Activated CD4-positive, alpha-beta T cell treated with anti-CD3 and anti-CD28 coated beads, Interleukin-2, amount 10 ng/mL, durations not matched to agents 7 days and 5 days (primary cell): ENCODE measurements at regions of chr5 and their contacts with region 1.

Region 1: GRCh38 chr5:156913719-156914370 is 49.2 kb downstream of the TIMD4 start:
- DNase-seq: peak; percentile 61
- H3K4me3 Mint-ChIP-seq: peak overlapping the region; percentile 29
- H3K27ac Mint-ChIP-seq: peak overlapping the region; percentile 97
- H3K4me1 Mint-ChIP-seq: peaks cover 62% of the 10 kb centered on the region
- H3K27me3 Mint-ChIP-seq: no peaks in the 10 kb centered on the region

Region 2: DNA sequence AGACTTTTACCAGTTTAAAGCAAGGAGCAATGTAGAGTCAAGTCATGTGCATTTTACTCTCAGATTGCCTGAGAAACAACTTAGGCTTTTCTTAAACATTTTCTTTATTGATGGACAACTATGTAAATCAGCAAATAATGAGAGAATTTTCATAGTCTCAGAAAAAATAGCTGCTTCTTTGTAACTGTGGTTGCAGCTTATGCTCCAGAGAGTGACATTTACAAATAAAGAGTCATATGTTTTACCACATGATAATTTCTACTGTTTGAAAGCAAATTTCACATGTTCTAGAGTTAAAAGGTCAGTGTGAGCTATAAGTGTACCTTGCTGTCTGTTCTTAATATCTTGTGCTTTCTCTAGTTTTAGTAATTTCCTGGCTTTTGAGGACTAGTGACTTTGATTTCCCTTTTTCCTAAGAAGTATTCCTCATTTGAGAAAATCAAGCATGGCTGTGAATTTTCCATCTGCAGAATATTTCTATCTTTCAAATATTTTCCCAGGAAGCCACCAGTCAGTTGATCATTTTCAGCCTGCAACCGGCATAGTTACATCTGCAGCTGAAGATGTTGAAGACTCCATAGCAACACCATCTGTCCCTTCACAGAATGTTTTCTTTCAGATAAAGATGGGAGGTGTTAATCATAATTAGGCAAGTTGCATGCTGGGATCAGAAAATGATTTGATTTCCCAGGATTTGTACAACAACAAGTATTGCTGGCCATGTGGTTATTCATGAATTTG is 357.0 kb before region 1 on chr5:
- CTCF ChIA-PET with region 1: no interaction called
- POLR2A ChIA-PET with region 1: no interaction called
- DNase-seq: no peak
- H3K4me3 Mint-ChIP-seq: no peak overlapping the region
- H3K27ac Mint-ChIP-seq: no peak overlapping the region
- H3K4me1 Mint-ChIP-seq: no peaks in the 10 kb centered on the region
- H3K27me3 Mint-ChIP-seq: peaks cover 6% of the 10 kb centered on the region

Region 3: DNA sequence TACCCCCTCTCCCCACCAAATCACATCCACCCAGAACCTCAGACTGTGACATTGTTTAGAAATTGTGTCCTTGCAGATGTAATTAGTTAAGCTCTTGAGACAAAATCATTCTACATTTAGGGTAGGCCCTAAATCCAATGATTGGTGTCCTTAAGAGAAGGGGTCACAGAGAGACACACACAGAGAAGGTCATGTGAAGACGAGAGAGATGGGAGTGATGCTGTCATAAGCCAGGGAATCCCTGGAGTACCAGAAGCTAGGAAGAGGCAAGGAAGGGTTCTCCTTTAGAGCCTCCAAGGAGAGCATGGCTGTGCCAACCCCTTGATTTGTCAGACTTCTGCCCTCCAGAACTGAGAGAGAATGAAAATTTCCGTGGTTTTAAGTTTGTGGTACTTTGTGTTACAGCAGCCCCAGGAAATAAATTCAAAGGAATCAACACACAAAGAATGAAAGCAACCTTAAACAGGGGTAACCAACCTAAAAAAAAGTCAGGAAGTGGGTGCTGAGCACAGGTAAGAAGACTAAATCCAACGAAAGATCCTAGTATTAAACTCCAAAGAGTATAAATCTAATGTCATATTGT is 15.6 kb after region 1 on chr5:
- CTCF ChIA-PET with region 1: interaction called, 37 read pairs
- POLR2A ChIA-PET with region 1: interaction called, 5 read pairs
- DNase-seq: peak; percentile 10
- H3K4me3 Mint-ChIP-seq: no peak overlapping the region
- H3K27ac Mint-ChIP-seq: peak overlapping the region; percentile 85
- H3K4me1 Mint-ChIP-seq: peaks cover 77% of the 10 kb centered on the region
- H3K27me3 Mint-ChIP-seq: no peaks in the 10 kb centered on the region

Region 4: DNA sequence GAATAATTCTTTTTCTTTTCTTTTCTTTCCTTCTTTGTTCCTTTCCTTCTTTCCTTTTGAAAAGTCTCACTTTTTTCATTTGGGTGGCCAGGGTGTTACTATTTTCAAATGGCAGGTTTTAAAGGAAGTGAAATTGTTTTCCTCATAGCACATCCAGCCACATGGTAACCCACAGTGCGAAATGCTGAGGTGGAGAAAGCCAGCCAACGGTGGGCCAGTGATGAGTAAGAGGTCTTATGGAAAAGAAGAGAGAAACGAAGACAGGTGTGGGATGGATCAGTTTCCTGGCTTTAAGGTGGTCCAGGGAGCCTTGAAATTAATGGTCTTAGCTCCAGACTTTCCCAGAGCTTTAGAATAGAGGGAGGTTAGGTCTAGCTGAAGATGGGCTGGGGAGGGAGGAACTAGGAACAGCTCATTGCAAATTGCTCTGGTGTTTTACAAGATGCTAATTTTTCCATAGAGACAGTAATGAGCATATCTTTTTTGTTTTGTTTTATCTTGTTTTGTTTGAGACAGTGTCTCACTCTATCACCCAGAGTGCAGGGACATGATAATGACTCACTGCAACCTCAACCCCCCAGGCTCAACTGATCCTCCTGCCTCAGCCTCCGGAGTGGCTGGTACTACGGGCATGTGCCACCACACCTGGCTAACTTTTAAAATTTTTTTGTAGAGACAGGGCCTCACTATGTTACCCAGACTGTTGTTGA is 284.6 kb after region 1 on chr5:
- CTCF ChIA-PET with region 1: no interaction called
- POLR2A ChIA-PET with region 1: no interaction called
- DNase-seq: no peak
- H3K4me3 Mint-ChIP-seq: peak overlapping the region; percentile 43
- H3K27ac Mint-ChIP-seq: peak overlapping the region; percentile 84
- H3K4me1 Mint-ChIP-seq: peaks cover 94% of the 10 kb centered on the region
- H3K27me3 Mint-ChIP-seq: no peaks in the 10 kb centered on the region